ENCODE measurements at regions of chr15 and their contacts with region 1.

Region 1: GRCh38 chr15:68755731-68756130 is 65.0 kb downstream of the ANP32A start:
- DNase-seq: no peak
- ATAC-seq: no peak
- H3K4me3 ChIP-seq: no peak overlapping the region
- H3K27ac ChIP-seq: no peak overlapping the region
- H3K4me1 ChIP-seq: no peaks in the 10 kb centered on the region
- H3K27me3 ChIP-seq: no peaks in the 10 kb centered on the region
- CTCF ChIP-seq: no peak

Region 2: GRCh38 chr15:68962465-68962864 is 206.7 kb after region 1 on chr15:
- CTCF ChIA-PET with region 1: no interaction called
- POLR2A ChIA-PET with region 1: interaction called, 10 read pairs
- in situ Hi-C with region 1: no loop called
- intact Hi-C with region 1: no loop called
- DNase-seq: no peak
- ATAC-seq: no peak
- H3K4me3 ChIP-seq: no peak overlapping the region
- H3K27ac ChIP-seq: no peak overlapping the region
- H3K4me1 ChIP-seq: no peaks in the 10 kb centered on the region
- H3K27me3 ChIP-seq: peaks cover 5% of the 10 kb centered on the region; the same call in 1 of the 2 replicates
- CTCF ChIP-seq: no peak

Region 3: GRCh38 chr15:69014454-69014853 is 258.7 kb after region 1 on chr15 and contains the start of gene NOX5:
- CTCF ChIA-PET with region 1: no interaction called
- POLR2A ChIA-PET with region 1: no interaction called
- in situ Hi-C with region 1: no loop called
- intact Hi-C with region 1: no loop called
- DNase-seq: no peak
- ATAC-seq: no peak
- H3K4me3 ChIP-seq: no peak within 1 kb of the TSS
- H3K27ac ChIP-seq: no peak within 1 kb of the TSS
- H3K4me1 ChIP-seq: no peaks in the 10 kb centered on the region
- H3K27me3 ChIP-seq: 0 out of 2 replicates have a peak, but pooled peaks cover 2% of the 10 kb centered on the region
- CTCF ChIP-seq: no peak
- total RNA-seq, gene NOX5: 0.26 TPM

Region 4: DNA sequence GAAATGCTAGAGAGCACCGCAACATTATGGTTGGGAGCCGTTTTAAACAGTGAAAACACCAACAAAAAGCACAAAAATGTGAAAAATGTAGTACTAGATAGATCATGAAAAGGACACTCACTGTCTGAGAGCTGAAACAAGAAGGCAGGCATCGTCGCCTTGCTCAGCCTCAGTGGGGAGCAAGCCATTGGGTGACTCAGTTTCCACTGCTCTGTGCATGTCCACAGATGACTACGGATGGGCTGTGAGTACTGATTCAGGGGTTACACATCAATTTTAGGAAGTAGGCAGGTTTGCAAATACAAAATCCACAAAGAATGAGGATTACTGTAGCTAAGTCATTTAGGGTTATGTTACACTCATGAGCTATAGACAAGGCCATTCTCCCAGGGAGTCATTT is 269.6 kb after region 1 on chr15:
- CTCF ChIA-PET with region 1: interaction called, 10 read pairs
- POLR2A ChIA-PET with region 1: no interaction called
- in situ Hi-C with region 1: no loop called
- intact Hi-C with region 1: no loop called
- DNase-seq: no peak
- ATAC-seq: no peak
- H3K4me3 ChIP-seq: no peak overlapping the region
- H3K27ac ChIP-seq: no peak overlapping the region
- H3K4me1 ChIP-seq: no peaks in the 10 kb centered on the region
- H3K27me3 ChIP-seq: peaks cover 5% of the 10 kb centered on the region
- CTCF ChIP-seq: no peak

Region 5: DNA sequence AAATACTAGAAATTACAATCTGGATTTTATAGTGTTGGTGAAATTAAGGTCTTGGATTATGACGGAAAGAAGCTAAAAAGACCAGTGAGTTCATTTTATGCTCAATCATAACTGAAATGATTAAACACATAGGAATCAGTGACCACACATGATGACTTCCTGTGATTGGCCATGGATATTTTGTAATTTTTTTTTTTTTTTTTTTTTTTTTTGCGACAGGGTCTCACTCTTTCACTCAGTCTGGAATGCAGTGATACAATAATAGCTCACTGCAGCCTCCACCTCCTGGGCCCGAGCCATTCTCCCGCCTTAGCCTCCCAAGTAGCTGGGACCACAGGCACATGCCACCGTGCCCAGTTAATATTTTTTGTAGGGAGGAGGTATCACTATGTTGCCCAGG is 590.4 kb after region 1 on chr15:
- CTCF ChIA-PET with region 1: no interaction called
- POLR2A ChIA-PET with region 1: no interaction called
- in situ Hi-C with region 1: no loop called
- intact Hi-C with region 1: no loop called
- DNase-seq: no peak
- ATAC-seq: no peak
- H3K4me3 ChIP-seq: no peak overlapping the region
- H3K27ac ChIP-seq: no peak overlapping the region
- H3K4me1 ChIP-seq: no peaks in the 10 kb centered on the region
- H3K27me3 ChIP-seq: no peaks in the 10 kb centered on the region
- CTCF ChIP-seq: no peak